ENCODE measurements at regions of chr1 and their contacts with region 1.

Region 1: DNA sequence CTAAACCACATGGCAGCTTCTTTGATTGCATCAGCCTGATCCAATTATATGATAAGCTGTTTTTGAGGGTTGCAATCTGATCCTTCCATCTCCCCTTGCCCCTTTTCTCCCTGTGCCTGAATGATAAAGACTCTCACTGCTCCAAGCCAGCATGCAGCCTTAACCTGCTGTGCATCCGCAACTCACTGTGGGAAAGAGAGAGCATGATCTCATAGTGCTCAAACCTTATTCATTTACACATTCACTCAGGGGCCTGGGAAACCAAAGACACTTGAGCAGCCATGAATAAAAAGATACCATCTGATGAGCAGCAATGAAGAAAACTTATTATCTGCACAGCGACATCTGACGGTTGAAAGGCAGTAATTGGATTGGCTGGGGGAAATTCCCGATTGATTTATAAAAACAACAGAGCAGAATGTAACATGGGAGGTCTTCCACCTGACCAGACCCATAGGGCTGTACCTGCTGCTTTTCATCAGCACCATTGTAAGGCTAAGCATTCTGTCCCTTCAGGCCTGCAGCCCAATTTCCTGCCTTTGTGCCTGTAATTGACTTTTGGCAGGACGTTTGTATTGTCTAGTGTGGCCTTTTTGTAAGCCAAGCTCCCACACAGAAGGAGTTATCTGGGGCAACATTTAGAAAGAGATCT is 62.5 kb downstream of the KIAA0040 start:
- ATAC-seq: peak; percentile 11 to 96 (median 86)
- H3K4me3 ChIP-seq: no peak overlapping the region
- H3K27ac ChIP-seq: peak overlapping the region in 1 of 2 donors; percentile 3
- H3K4me1 ChIP-seq: peaks cover 10 to 13% of the 10 kb centered on the region in 2 donors

Region 2: DNA sequence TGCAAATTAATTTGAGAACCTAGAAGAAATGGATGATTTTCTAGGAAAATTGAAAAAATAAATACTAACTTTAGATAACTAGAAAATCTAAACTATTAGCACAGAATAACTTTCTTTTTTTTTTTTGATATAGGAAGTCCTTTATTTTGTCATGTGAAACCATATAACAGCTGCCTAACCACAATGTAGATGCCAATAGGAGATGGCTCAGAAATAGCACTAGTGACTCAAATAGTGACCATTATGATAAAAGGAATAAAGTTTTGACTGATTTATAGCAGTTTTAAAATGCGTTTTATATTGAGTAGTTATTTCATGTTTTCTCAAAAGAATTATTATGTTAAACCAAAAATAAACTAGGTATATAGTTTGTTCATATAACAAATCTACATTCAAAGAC is 288.4 kb before region 1 on chr1:
- in situ Hi-C with region 1: no loop called
- ATAC-seq: no peak
- H3K4me3 ChIP-seq: no peak overlapping the region
- H3K27ac ChIP-seq: no peak overlapping the region
- H3K4me1 ChIP-seq: no peaks in the 10 kb centered on the region

Region 3: GRCh38 chr1:175035865-175036264 is 94.3 kb before region 1 on chr1:
- in situ Hi-C with region 1: loop called in 2 of 9 experiments (anchors 10 to 25 kb)
- ATAC-seq: peak in 2 of 8 experiments; percentile 75 to 86
- H3K4me3 ChIP-seq: no peak overlapping the region
- H3K27ac ChIP-seq: no peak overlapping the region
- H3K4me1 ChIP-seq: no peaks in the 10 kb centered on the region

Measured in motor neuron (in vitro differentiated cells).